ENCODE measurements at regions of chr1 and their contacts with region 1.

Region 1: DNA sequence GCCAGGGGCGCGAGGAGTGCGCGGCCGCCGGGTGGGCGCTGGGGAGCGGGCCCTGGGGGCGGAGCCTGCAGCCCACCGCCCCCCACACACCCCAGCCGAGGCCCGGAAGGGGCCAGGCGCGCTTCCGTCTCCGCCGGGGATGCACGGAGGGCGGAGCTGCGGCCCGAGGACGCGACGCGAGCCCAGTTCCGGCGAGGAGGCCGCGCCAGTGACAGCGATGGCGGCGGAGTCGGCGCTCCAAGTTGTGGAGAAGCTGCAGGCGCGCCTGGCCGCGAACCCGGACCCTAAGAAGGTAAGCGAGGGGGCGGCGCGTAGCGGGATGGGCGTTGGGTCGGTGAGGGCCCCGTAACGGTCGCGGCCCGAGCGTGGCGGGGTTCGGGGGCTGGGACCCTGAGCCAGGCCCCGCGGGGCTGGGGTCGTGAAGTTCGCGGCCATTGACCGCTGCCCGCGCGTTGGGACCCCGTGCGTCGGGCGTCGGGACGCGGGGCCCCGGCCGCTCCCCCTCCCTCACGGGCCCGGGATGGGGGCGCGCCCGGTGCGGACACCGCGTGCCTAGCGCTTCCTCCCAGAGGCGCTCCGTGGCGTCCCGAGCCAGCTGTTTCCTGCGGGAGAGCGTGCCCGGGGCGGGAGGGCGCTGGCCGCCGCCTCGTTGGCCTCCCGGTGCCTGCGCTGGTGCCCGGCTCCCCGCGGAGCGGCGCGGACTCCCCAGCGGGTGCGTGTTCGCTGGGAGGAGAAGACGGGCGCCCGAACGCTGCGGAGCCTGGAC is at the start of gene ELOA:
- DNase-seq: peak; percentile 78
- H3K4me3 Mint-ChIP-seq: peak within 1 kb of the TSS; percentile 89
- H3K27ac Mint-ChIP-seq: peak within 1 kb of the TSS; percentile 90
- H3K4me1 Mint-ChIP-seq: peaks cover 42% of the 10 kb centered on the region
- H3K27me3 Mint-ChIP-seq: no peaks in the 10 kb centered on the region
- total RNA-seq, gene ELOA: 42.0 and 45.5 TPM in 2 replicates

Region 2: DNA sequence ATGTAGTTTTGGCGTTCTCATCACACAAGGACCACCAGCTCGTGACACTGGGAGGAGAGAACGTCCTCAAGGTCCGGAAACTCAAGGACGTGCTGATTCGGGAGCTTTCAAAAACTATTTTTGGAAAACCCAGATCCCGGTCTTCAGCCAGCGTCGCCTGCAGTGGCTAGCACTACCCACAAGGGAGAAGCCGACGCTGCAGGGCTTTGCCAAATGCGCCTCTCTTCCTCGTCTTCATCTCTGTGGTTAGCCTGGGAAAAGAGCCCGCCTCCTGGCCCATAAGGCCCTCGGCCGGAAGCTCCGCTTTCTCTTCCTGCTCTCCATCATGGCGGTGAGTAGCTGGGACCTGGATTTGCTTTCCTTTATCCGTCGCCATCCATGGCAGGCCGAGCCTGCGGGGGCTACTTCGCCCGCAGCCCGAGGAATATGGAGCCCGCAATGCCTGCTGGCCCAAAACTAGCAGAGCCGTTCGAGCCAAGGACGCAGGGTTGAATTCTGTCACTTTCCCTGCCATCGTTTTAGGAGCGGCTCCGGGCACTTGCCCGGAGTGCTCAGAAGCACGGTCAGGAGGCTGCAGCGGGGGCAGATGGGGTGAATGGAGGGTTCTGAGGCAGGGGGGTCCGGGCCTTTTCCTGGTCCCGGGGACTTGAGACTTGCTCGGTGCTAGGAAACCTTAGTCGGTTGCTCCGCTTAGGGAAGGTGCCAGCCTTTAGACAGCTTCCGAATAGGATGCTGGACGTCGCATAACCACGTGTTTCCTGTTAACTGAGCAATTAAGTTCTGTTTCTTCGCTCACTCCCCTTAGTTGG is 51.8 kb before region 1 on chr1 and contains the start of gene RPL11:
- intact Hi-C with region 1: loop called (anchors 2 kb)
- DNase-seq: peak; percentile 83
- H3K4me3 Mint-ChIP-seq: peak within 1 kb of the TSS; percentile 93
- H3K27ac Mint-ChIP-seq: peak within 1 kb of the TSS; percentile 90
- H3K4me1 Mint-ChIP-seq: peaks cover 38% of the 10 kb centered on the region
- H3K27me3 Mint-ChIP-seq: no peaks in the 10 kb centered on the region
- total RNA-seq, gene RPL11: 1,169 and 1,221 TPM in 2 replicates

Region 3: GRCh38 chr1:23727362-23727827 is 16.1 kb before region 1 on chr1:
- intact Hi-C with region 1: no loop called
- DNase-seq: no peak
- H3K4me3 Mint-ChIP-seq: no peak overlapping the region
- H3K27ac Mint-ChIP-seq: no peak overlapping the region
- H3K4me1 Mint-ChIP-seq: peaks cover 14% of the 10 kb centered on the region
- H3K27me3 Mint-ChIP-seq: no peaks in the 10 kb centered on the region

Region 4: DNA sequence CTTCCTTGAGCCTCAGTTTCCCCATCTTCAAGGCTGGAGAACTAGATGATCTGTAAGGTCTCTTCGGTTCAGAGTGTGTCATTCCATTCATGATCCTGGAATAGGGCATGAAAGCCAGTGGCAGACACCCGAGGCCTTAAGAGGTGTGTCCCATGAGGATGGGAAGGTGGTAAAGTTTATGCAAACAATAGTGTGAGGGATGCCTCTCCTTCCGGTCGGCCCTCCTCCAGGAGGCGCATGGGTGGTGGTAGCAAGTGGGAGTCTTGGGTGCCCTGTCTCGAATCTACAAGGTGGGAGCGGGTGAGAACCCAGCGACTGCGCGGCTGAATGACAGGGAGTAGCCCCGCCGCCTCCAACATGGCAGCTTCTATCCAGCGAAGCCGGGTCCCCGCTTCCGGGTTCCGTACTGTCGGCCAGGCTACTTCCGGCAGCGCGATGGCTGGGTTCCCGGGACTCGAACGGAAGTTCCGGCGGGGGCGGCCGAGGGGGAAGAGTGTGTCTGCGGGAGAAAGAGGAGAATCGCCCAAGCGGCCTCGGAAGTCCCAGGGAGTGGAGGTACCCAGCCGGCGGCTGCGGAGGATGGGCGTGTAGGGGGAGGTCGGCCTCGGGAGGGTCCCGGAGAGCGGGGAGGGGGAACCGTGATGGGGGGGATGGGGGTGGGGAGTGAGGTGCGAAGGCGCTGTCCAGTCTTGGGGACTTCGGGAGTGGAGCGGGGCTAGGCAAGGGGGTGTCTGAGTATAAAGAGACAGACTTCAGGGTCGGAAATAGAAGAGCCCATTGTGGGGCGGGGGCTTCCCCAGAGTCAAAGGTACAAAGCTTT is 47.4 kb after region 1 on chr1 and contains the start of gene LYPLA2:
- intact Hi-C with region 1: loop called (anchors 5 kb)
- DNase-seq: peak; percentile 84
- H3K4me3 Mint-ChIP-seq: peak within 1 kb of the TSS; percentile 98
- H3K27ac Mint-ChIP-seq: peak within 1 kb of the TSS; percentile 92
- H3K4me1 Mint-ChIP-seq: peaks cover 17% of the 10 kb centered on the region
- H3K27me3 Mint-ChIP-seq: no peaks in the 10 kb centered on the region
- total RNA-seq, gene LYPLA2: 86.4 and 88.4 TPM in 2 replicates

Measured in activated T-helper 2 cell treated with anti-CD3 and anti-CD28 coated beads, Interferon-gamma antibody, Interleukin-2, Interleukin-4, amounts not matched to agents 10 μg/mL and 5 μg/mL and 100 μg/mL, durations not matched to agents 14 hours and 24 hours and 36 hours (primary cell).